ENCODE measurements at regions of chr17 and their contacts with region 1.

Region 1: GRCh38 chr17:67376737-67377487 is at the start of gene PITPNC1:
- DNase-seq: peak; percentile 92 to 95
- ATAC-seq: peak; percentile 91
- H3K4me3 ChIP-seq: peak within 1 kb of the TSS; percentile 51 to 54
- H3K27ac ChIP-seq: peak within 1 kb of the TSS in 1 of 2 donors; percentile 15
- H3K4me1 ChIP-seq: no peaks in the 10 kb centered on the region
- H3K27me3 ChIP-seq: no peaks in the 10 kb centered on the region
- total RNA-seq, gene PITPNC1: 28.7 to 29.6 TPM

Region 2: GRCh38 chr17:67475236-67475937 is 98.5 kb after region 1 on chr17:
- intact Hi-C with region 1: loop called (anchors 2 kb)
- DNase-seq: peak; percentile 84 to 88
- ATAC-seq: peak; percentile 83
- H3K4me3 ChIP-seq: no peak overlapping the region
- H3K27ac ChIP-seq: no peak overlapping the region
- H3K4me1 ChIP-seq: peaks cover 0 to 2% of the 10 kb centered on the region in 2 donors
- H3K27me3 ChIP-seq: no peaks in the 10 kb centered on the region

Region 3: DNA sequence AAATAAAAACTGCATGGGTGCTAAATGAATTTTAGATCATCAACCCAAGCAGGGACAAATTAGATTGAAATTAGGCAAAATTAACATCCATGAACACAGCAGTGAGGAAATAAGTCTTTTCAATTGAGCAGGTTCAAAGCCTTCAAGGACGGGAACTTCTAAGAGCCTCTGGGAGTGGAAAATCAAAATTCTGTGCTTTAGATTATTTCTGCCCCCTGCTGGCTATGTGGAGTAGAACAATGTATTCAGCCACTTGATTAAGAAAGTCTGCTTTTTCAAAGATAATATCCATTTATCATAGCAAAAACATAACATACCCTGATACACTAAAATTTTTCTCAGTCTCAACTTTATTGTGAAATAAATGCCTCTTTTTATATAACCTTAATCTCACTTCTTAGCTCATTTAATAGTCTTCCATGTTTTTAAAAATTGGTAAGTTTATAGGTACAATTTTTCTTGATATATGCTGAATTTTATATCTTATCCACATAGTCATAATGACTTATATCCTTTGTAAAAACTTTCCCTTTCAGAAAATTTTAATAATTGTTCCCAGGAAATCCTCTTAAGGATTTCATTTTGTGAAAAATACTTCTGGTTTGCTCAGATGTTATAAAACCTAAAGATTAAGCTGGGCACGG is 312.7 kb after region 1 on chr17:
- intact Hi-C with region 1: loop called (anchors 2 to 5 kb)
- DNase-seq: no peak
- ATAC-seq: peak; percentile 76
- H3K4me3 ChIP-seq: no peak overlapping the region
- H3K27ac ChIP-seq: no peak overlapping the region
- H3K4me1 ChIP-seq: peaks cover 0 to 2% of the 10 kb centered on the region in 2 donors
- H3K27me3 ChIP-seq: no peaks in the 10 kb centered on the region

Measured in aorta (tissue), 5 donors.